ENCODE measurements at regions of chr2 and their contacts with region 1.

Region 1: DNA sequence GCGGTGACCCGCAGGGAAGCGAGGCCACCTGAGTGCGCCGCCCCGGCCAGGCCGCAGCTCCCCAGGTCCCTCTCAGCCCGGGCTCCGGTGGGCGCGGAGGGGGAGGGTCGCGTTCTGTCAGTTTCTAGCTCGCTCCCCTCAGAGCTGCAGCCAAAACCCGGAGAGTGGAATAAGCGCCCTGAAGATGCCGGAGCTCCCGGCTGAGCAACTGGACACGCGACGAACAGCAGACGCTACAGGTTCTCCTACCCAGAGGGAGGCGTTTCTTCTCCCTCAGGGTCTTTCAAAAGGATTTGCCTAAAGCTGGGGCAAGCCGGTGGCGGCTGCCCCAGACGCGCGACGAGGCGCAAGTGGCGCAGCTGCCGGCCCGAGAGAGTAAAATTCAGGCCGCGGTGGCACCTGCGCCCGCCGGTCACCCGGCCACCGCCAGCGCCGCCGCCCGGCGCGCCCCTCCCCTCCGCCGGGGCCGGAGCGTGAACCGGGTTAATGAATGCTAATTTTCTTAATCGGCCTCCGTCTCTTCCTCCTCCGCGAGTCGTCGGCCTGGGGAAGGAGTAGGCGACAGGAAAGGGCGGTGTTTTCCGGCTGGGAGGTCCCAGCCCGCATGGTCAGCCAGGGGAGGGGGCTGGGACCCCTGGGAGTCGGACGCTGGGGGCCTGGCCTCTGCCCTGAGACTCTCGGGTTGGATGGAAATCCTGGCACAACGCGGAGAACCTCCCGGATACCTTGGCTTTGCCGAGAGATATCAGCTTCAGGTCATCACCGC is 845 bp upstream of the CDC42EP3 start:
- DNase-seq: peak; percentile 82 to 84
- H3K4me3 ChIP-seq: peak overlapping the region; percentile 79
- H3K27ac ChIP-seq: peak overlapping the region; percentile 90
- H3K4me1 ChIP-seq: peaks cover 43% of the 10 kb centered on the region
- H3K27me3 ChIP-seq: no peaks in the 10 kb centered on the region
- CTCF ChIP-seq: no peak

Region 2: GRCh38 chr2:36568516-36569246 is 1103.6 kb before region 1 on chr2:
- CTCF ChIA-PET with region 1: no interaction called
- POLR2A ChIA-PET with region 1: interaction called, 10 read pairs
- intact Hi-C with region 1: no loop called
- DNase-seq: peak in 1 of 2 experiments; percentile 72
- H3K4me3 ChIP-seq: no peak overlapping the region; the same call in 1 of the 2 replicates
- H3K27ac ChIP-seq: peak overlapping the region; percentile 69
- H3K4me1 ChIP-seq: peaks cover 46% of the 10 kb centered on the region
- H3K27me3 ChIP-seq: no peaks in the 10 kb centered on the region
- CTCF ChIP-seq: no peak

Region 3: DNA sequence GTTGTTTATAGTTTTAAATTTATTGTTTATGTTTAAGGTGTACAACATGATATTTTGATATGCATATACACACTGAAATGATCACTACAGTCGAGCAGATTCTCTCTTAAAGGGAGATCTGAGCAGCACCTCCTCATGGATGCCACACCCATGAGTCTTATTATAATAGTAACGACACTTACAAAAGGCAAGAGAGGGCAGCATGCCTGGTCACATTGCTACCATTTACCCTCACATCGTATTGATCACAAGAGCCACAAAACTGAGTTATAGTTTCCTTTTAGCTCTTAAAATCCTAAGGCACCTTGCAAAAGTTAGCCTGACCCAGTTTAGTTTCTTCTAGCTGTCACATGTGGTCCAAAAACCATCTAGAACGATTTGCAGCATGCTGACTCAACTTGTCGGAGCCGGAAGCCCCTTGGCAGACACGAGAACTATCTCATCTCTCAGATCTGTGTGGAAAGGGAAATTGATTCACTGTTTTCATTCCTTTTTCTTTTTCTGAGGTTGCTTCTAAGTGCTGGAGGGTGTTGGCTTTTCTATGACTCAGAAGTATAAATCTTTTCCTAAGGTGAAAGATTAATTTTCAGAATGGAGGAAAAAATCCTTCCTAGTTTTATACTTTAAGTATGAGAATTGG is 86.2 kb before region 1 on chr2:
- CTCF ChIA-PET with region 1: interaction called, 9 read pairs
- POLR2A ChIA-PET with region 1: interaction called, 3 read pairs
- intact Hi-C with region 1: loop called (anchors 5 kb)
- DNase-seq: peak; percentile 43 to 92
- H3K4me3 ChIP-seq: peak overlapping the region; percentile 12; the same call in 1 of the 2 replicates
- H3K27ac ChIP-seq: peak overlapping the region; percentile 94
- H3K4me1 ChIP-seq: peaks cover 82% of the 10 kb centered on the region
- H3K27me3 ChIP-seq: no peaks in the 10 kb centered on the region
- CTCF ChIP-seq: no peak

Region 4: DNA sequence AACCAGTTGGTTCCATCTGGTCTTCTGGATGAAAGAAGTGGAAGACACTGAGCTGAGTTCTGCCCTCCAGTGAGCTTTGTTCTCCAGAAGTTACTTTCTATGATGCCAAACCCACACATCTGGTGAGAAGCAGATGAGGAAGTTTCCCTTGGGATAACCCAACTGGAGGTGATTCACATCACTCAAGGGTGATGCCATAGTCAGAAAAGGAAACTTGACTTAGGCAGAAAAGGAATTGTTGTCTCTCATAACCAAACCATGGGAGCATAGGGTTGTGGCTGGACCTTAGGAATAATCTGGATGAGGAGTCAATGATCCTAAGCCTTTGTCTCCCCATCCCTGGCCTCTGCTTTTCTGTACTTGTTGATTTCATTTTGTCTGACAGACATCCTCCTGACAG is 44.6 kb before region 1 on chr2:
- CTCF ChIA-PET with region 1: no interaction called
- POLR2A ChIA-PET with region 1: no interaction called
- intact Hi-C with region 1: no loop called
- DNase-seq: no peak
- H3K4me3 ChIP-seq: no peak overlapping the region
- H3K27ac ChIP-seq: no peak overlapping the region
- H3K4me1 ChIP-seq: no peaks in the 10 kb centered on the region
- H3K27me3 ChIP-seq: no peaks in the 10 kb centered on the region
- CTCF ChIP-seq: no peak

Region 5: GRCh38 chr2:37645362-37645761 is 26.9 kb before region 1 on chr2:
- CTCF ChIA-PET with region 1: no interaction called
- POLR2A ChIA-PET with region 1: no interaction called
- intact Hi-C with region 1: no loop called
- DNase-seq: no peak
- H3K4me3 ChIP-seq: no peak overlapping the region
- H3K27ac ChIP-seq: no peak overlapping the region
- H3K4me1 ChIP-seq: no peaks in the 10 kb centered on the region
- H3K27me3 ChIP-seq: no peaks in the 10 kb centered on the region
- CTCF ChIP-seq: no peak

Region 6: DNA sequence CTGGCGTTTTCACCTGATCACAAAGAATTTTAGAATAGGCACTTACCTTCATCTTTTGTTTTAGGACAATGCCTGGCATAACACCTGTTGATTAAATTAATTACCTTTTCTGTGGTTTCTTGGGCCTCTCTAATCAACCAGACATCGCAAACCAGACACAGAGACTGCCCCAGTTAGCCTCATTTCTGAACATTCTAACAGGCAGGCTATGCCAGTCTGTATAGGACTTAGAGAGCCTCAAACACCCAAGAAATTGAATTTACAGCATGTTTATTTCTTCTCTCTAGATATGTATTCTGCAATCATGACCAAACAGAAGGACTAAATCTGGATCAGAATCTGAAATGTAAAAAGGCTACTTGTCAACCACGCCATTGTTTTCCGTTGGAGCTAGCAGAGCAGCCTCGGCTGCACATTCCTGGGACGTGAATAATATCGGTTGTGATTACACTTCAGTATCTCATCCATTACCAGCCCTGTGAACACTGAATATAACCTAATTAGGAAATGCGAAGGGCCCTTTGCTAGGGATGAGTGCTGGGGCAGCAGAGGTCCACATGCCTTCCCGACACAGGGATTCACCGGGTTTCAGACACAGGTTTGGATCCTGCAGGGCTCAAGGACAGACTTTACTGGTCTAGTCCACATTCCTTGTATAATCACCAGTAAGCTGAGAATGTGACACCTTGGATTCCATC is 16.6 kb after region 1 on chr2:
- CTCF ChIA-PET with region 1: interaction called, 4 read pairs
- POLR2A ChIA-PET with region 1: no interaction called
- intact Hi-C with region 1: loop called (anchors 1 kb)
- DNase-seq: peak; percentile 76 to 97
- H3K4me3 ChIP-seq: peak overlapping the region; percentile 19; the same call in 1 of the 2 replicates
- H3K27ac ChIP-seq: peak overlapping the region; percentile 85
- H3K4me1 ChIP-seq: peaks cover 30% of the 10 kb centered on the region
- H3K27me3 ChIP-seq: no peaks in the 10 kb centered on the region
- CTCF ChIP-seq: no peak

Region 7: GRCh38 chr2:37767956-37768925 is 96.0 kb after region 1 on chr2:
- CTCF ChIA-PET with region 1: no interaction called
- POLR2A ChIA-PET with region 1: no interaction called
- intact Hi-C with region 1: loop called (anchors 2 kb)
- DNase-seq: peak; percentile 75 to 95
- H3K4me3 ChIP-seq: peak overlapping the region; percentile 9; the same call in 1 of the 2 replicates
- H3K27ac ChIP-seq: peak overlapping the region; percentile 66
- H3K4me1 ChIP-seq: peaks cover 42% of the 10 kb centered on the region
- H3K27me3 ChIP-seq: no peaks in the 10 kb centered on the region
- CTCF ChIP-seq: no peak

Region 8: DNA sequence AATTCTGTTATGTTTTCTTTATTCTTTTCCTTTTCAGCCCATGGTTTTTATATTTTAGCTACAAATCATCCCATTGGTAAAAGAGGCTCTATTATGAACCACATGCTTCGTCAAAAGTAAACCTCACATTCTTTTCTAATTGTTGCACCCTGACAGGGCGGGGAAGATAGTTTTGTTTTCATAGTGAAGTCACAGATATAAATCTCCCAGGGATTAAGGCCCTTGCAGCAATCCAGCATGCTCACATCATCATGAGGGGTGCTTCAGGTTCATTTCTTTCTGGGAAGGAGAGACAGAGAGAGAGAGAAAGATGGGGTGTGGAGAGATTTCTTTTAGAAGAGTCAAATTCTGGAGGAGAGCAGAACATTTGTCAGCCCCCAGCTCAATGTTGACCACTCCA is 123.7 kb after region 1 on chr2:
- CTCF ChIA-PET with region 1: no interaction called
- POLR2A ChIA-PET with region 1: interaction called, 5 read pairs
- intact Hi-C with region 1: loop called (anchors 1 kb)
- DNase-seq: peak; percentile 33 to 89
- H3K4me3 ChIP-seq: no peak overlapping the region; the same call in 1 of the 2 replicates
- H3K27ac ChIP-seq: peak overlapping the region; percentile 42
- H3K4me1 ChIP-seq: peaks cover 39% of the 10 kb centered on the region
- H3K27me3 ChIP-seq: no peaks in the 10 kb centered on the region
- CTCF ChIP-seq: no peak

Region 9: DNA sequence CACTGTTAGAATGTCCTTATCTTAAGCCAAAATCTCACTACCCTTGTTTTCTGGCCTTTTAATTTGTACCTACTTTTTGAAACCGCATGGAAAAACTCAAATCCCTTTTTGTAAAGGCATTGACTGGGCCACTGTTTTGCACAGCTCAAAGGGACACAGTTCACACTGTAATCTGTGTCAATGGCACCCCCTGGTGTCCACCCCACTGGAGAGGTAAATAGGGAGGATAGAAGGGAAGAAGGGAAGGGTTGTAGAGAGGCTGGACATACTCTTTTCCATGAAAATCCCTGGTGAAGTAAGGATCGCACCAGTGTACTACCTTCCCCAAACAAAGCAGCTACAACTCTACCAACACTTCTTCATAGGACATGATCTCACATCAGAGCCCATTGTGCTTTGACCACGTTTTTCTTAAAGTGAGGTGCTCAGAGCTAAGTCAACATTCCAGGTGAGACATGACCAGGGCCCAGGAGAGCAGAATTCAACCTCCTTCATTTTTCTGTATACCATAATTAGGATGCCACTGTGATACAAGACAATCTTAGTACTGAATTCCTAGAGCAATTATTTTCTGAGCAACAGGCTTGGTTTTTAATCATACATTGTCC is 160.4 kb after region 1 on chr2:
- CTCF ChIA-PET with region 1: interaction called, 4 read pairs
- POLR2A ChIA-PET with region 1: interaction called, 5 read pairs
- intact Hi-C with region 1: loop called (anchors 1 kb)
- DNase-seq: peak; percentile 67 to 84
- H3K4me3 ChIP-seq: no peak overlapping the region
- H3K27ac ChIP-seq: no peak overlapping the region
- H3K4me1 ChIP-seq: peaks cover 17% of the 10 kb centered on the region
- H3K27me3 ChIP-seq: no peaks in the 10 kb centered on the region
- CTCF ChIP-seq: peak; percentile 93

Measured in PC-9 (cell line).